K562 (cell line): ENCODE measurements at regions of chr4 and their contacts with region 1.

Region 1: GRCh38 chr4:10582059-10582686 is 102.4 kb downstream of the CLNK start:
- DNase-seq: peak; percentile 37 to 60 (median 52)
- ATAC-seq: peak; percentile 85
- H3K4me3 ChIP-seq: no peak overlapping the region
- H3K27ac ChIP-seq: no peak overlapping the region
- H3K4me1 ChIP-seq: no peaks in the 10 kb centered on the region
- H3K27me3 ChIP-seq: no peaks in the 10 kb centered on the region
- CTCF ChIP-seq: peak; percentile 60 to 87 (median 74)
- EP300 ChIP-seq: no peak
- POLR2A ChIP-seq: no peak
- RAD21 ChIP-seq: peak; percentile 76 to 83

Region 2: GRCh38 chr4:11428899-11429698 is 846.9 kb after region 1 on chr4:
- CTCF ChIA-PET with region 1: interaction called, 3 read pairs
- POLR2A ChIA-PET with region 1: no interaction called
- in situ Hi-C with region 1: loop called (anchors 25 kb)
- intact Hi-C with region 1: loop called (anchors 10 kb)
- DNase-seq: no peak
- ATAC-seq: peak; percentile 42; the same call in 1 of the 3 replicates
- H3K4me3 ChIP-seq: no peak overlapping the region
- H3K27ac ChIP-seq: no peak overlapping the region
- H3K4me1 ChIP-seq: no peaks in the 10 kb centered on the region
- H3K27me3 ChIP-seq: no peaks in the 10 kb centered on the region
- CTCF ChIP-seq: no peak
- EP300 ChIP-seq: no peak
- POLR2A ChIP-seq: no peak
- RAD21 ChIP-seq: no peak